Right ventricle myocardium inferior (tissue), 1 donor: ENCODE measurements at regions of chr14 and their contacts with region 1.

Region 1: GRCh38 chr14:23469127-23469905 is at the start of gene NGDN:
- DNase-seq: peak; percentile 95
- ATAC-seq: peak; percentile 97
- total RNA-seq, gene NGDN: 19.8 TPM

Region 2: GRCh38 chr14:23301288-23301968 is 167.9 kb before region 1 on chr14:
- intact Hi-C with region 1: loop called (anchors 5 kb)
- DNase-seq: peak; percentile 99
- ATAC-seq: peak; percentile 90